ENCODE measurements at regions of chr10 and their contacts with region 1.

Region 1: DNA sequence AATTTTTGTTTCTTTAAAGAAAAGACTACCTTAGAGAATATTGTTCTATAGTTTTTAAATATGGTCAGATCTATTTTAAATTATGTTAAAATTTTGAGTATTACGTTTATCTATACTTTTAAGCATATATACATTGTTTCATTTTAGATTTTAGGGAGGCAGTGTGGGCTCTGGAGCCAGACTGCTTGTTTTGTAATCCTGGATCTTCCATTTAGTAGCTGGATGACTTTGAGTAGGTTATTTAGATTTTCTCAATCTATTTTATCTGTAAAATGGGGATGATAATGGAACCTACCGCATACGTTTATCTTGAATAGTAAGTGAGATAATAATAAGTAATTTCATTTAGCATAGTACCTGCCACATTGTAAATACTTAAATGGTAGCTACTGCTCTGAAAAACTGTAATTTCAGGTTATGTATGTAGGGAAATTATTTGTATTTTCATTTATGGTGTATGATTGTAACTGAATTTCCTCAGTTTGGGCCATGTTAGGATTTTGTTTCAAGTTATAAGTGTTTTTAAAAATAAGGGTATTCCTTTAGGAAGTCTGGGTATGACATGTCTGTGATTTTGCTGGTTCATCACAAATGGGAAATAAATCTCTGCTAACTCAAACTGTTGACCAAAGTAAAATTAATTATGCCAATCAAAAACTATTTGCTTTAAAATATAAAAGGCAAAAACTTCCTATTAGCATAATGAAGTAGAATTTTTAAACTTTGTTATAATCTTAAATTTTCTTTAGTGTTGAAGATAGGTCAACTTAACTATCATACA is 6.5 kb downstream of the PTEN start:
- DNase-seq: no peak
- H3K4me3 ChIP-seq: peak overlapping the region; percentile 96
- H3K27ac ChIP-seq: no peak overlapping the region
- H3K4me1 ChIP-seq: peaks cover 55% of the 10 kb centered on the region
- CTCF ChIP-seq: no peak

Region 2: DNA sequence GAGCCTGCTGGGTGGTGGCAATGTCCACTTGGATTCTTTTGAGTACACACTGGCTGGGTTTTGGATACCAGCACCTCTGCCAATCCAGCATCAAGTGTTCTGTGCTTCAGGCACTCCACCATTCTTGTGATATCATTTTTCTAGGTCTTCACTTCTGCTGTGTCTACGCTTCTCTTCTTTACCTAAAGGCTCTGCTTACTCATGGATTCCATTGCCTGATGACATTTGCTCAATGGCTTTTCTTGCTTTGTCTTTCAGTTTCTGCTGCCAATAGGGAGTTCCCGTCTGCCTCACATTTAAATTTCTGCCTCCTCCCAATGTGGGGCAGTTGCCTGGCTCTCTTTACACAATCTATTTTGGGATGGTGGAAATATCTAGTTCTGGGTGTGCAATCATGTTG is 223.0 kb before region 1 on chr10:
- CTCF ChIA-PET with region 1: no interaction called
- POLR2A ChIA-PET with region 1: no interaction called
- intact Hi-C with region 1: no loop called
- DNase-seq: no peak
- H3K4me3 ChIP-seq: no peak overlapping the region
- H3K27ac ChIP-seq: no peak overlapping the region
- H3K4me1 ChIP-seq: no peaks in the 10 kb centered on the region
- CTCF ChIP-seq: no peak

Region 3: DNA sequence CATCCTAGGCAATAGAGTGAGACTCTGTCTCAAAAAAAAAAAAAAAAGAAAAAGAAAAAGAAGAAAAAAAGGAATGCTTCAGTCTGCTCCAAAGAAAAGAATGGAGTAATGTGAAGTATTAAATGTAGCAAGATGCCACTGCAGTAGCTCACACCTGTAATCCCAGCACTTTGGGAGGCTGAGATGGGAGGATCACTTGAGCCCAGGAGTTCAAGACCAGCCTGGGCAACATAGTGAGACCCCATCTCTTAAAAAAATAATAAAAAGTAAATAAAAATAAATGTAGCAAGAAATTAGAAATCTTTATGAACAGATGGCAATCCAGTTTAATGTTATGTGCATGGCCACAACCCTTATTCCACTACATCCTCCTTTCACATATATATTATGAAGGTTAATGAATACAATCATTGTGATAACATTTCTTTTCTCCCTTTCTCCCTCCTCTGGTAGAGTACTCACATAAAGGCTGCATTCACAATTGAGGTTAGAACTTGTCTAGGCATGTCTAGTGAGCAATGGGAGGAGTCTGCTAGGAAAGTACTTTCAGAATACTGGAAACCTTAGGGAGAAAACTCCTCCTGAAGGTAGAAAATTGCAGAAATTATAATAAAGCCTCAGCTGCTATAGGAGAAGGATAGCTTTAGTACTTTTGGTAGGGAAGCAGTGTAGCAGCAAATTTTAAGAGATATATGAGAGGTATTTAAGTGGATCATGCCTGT is 27.0 kb before region 1 on chr10:
- CTCF ChIA-PET with region 1: no interaction called
- POLR2A ChIA-PET with region 1: no interaction called
- intact Hi-C with region 1: no loop called
- DNase-seq: no peak
- H3K4me3 ChIP-seq: no peak overlapping the region
- H3K27ac ChIP-seq: no peak overlapping the region
- H3K4me1 ChIP-seq: no peaks in the 10 kb centered on the region
- CTCF ChIP-seq: no peak

Region 4: GRCh38 chr10:87854251-87854650 is 15.7 kb before region 1 on chr10:
- CTCF ChIA-PET with region 1: no interaction called
- POLR2A ChIA-PET with region 1: no interaction called
- intact Hi-C with region 1: no loop called
- DNase-seq: no peak
- H3K4me3 ChIP-seq: no peak overlapping the region
- H3K27ac ChIP-seq: no peak overlapping the region
- H3K4me1 ChIP-seq: peaks cover 4% of the 10 kb centered on the region
- CTCF ChIP-seq: no peak

Region 5: DNA sequence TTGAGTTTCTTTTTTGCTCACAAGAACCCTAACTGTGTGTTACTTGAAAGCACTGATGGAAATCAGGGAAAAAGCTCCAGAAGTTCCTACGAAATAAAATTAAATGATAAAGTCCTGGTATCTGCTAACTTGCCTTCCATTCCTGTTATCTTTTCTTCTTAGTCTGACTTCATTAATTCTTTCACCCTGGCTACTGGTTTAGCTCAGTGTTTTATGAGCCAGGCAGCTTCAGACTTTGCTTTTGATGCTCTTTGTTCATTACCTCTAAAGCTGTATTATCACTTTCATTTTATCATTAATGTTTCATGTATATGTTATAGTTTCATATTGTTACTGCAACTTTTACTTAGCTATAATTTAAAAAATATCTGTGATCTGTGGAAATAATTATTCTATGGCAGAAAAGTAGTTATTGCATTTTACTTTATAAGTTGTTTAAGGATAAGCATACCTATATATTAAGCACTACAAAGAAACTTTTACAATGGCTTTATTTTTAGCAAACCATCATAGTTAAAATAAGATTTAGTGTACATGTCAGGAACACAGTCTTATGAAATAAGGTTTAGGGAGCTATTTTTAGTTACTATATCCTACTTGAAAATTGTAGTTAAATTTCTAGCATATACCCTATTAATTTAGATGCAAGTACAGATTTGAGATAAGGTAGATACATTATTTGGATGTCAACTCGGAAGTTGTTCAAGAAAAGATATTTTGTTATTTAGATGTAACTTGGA is 12.8 kb after region 1 on chr10:
- CTCF ChIA-PET with region 1: interaction called, 3 read pairs
- POLR2A ChIA-PET with region 1: interaction called, 10 read pairs
- intact Hi-C with region 1: no loop called
- DNase-seq: no peak
- H3K4me3 ChIP-seq: no peak overlapping the region
- H3K27ac ChIP-seq: no peak overlapping the region
- H3K4me1 ChIP-seq: no peaks in the 10 kb centered on the region
- CTCF ChIP-seq: no peak